Activated B cell treated with CpG ODN at 0.5 μM for 24 hours (primary cell): ENCODE measurements at regions of chr17 and their contacts with region 1.

Region 1: DNA sequence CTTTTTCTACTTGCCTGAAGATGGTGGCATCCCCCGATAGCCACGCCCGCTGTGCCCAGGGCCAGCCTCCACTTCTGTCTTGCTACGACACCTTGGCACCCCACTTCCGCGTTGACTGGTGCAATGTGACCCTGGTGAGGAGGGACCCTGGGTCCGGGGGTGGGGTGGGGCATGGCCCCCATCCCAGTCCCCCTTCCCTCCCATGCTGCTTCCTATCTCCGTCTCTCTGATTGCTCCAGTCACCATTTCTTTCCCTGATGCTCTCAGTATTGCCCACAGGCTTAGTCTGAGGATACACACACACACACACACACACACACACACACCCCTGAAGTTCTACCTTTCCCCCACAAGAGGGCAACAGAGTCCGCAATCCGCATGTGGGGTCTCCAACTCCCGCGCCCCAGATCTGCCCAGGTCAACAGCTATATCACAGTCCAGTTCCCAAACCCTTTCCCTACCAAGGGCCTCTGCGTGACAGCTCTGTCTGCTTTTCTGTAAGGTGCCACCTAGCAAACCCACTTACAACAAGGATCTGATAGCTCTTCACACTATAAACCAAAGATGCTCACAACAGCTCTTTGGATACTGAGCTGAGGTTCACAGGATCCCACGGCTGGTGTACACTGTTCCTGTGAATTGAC is 3.4 kb downstream of the SGCA start:
- DNase-seq: peak; percentile 53
- ATAC-seq: peak; percentile 81
- H3K4me3 Mint-ChIP-seq: peak overlapping the region; percentile 49
- H3K27ac Mint-ChIP-seq: peak overlapping the region; percentile 50
- H3K4me1 Mint-ChIP-seq: peaks cover 29% of the 10 kb centered on the region
- H3K27me3 Mint-ChIP-seq: no peaks in the 10 kb centered on the region
- CTCF ChIP-seq: no peak

Region 2: DNA sequence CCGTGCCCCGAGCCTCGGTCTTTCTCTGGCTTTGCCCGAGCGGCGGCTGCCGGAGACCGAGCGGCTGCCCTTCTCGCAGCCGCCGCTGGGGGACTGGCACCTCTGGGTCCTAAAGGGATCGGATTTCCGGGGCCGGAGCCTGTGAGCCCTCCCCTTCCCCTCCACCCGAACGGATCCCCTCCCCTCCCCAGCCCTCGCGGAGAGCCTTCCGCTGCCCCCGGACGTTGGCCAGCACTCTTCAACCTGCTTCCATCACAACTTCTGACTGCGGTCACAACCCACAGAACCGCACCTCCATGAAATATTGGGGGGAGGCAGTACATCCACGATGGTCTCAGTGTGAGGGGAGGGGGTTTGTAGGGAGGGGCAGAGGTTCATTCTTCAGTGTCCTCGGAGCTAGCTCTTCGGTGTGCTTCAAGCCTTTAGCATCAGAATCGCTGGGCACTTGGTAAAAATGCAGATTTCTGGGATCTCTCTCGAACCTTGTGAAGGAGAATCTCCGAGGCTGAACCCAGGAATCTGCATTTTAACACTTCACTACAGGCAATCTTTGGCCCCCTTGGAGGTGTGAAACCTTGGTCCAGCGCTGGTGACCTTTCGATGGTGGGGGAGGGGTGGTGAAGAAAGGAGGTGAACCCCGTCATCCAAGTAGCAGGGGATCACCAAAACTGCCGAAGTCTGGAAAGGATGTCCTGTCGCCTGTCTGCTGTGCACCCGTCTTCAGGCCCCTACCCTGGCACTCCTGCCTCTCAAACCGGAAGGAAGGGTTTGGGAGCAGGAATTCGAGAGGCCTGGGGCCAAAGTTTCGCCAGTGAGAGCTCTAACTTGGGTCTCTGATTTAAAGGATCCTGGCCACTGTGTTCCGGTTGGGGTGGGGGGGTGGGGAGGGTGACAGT is 18.0 kb before region 1 on chr17:
- CTCF ChIA-PET with region 1: interaction called, 7 read pairs
- POLR2A ChIA-PET with region 1: interaction called, 19 read pairs
- intact Hi-C with region 1: no loop called
- DNase-seq: peak; percentile 80
- ATAC-seq: peak; percentile 40
- H3K4me3 Mint-ChIP-seq: peak overlapping the region; percentile 93
- H3K27ac Mint-ChIP-seq: peak overlapping the region; percentile 91
- H3K4me1 Mint-ChIP-seq: peaks cover 34% of the 10 kb centered on the region
- H3K27me3 Mint-ChIP-seq: no peaks in the 10 kb centered on the region
- CTCF ChIP-seq: no peak

Region 3: GRCh38 chr17:50194934-50195865 is 26.0 kb after region 1 on chr17:
- CTCF ChIA-PET with region 1: interaction called, 86 read pairs
- POLR2A ChIA-PET with region 1: interaction called, 16 read pairs
- intact Hi-C with region 1: loop called (anchors 1 kb)
- DNase-seq: no peak
- ATAC-seq: no peak
- H3K4me3 Mint-ChIP-seq: no peak overlapping the region
- H3K27ac Mint-ChIP-seq: no peak overlapping the region
- H3K4me1 Mint-ChIP-seq: peaks cover 37% of the 10 kb centered on the region
- H3K27me3 Mint-ChIP-seq: peaks cover 9% of the 10 kb centered on the region
- CTCF ChIP-seq: no peak

Region 4: GRCh38 chr17:50269477-50270434 is 100.5 kb after region 1 on chr17:
- CTCF ChIA-PET with region 1: interaction called, 26 read pairs
- POLR2A ChIA-PET with region 1: no interaction called
- intact Hi-C with region 1: loop called (anchors 1 kb)
- DNase-seq: peak; percentile 31
- ATAC-seq: peak; percentile 76
- H3K4me3 Mint-ChIP-seq: no peak overlapping the region
- H3K27ac Mint-ChIP-seq: no peak overlapping the region
- H3K4me1 Mint-ChIP-seq: peaks cover 6% of the 10 kb centered on the region
- H3K27me3 Mint-ChIP-seq: peaks cover 26% of the 10 kb centered on the region
- CTCF ChIP-seq: no peak

Region 5: GRCh38 chr17:50283246-50283645 is 114.0 kb after region 1 on chr17:
- CTCF ChIA-PET with region 1: interaction called, 10 read pairs
- POLR2A ChIA-PET with region 1: no interaction called
- intact Hi-C with region 1: no loop called
- DNase-seq: no peak
- ATAC-seq: no peak
- H3K4me3 Mint-ChIP-seq: no peak overlapping the region
- H3K27ac Mint-ChIP-seq: no peak overlapping the region
- H3K4me1 Mint-ChIP-seq: no peaks in the 10 kb centered on the region
- H3K27me3 Mint-ChIP-seq: peaks cover 40% of the 10 kb centered on the region
- CTCF ChIP-seq: no peak

Region 6: GRCh38 chr17:50297407-50297865 is 128.2 kb after region 1 on chr17:
- CTCF ChIA-PET with region 1: interaction called, 18 read pairs
- POLR2A ChIA-PET with region 1: interaction called, 5 read pairs
- intact Hi-C with region 1: loop called (anchors 1 kb)
- DNase-seq: peak; percentile 67
- ATAC-seq: peak; percentile 100
- H3K4me3 Mint-ChIP-seq: no peak overlapping the region
- H3K27ac Mint-ChIP-seq: no peak overlapping the region
- H3K4me1 Mint-ChIP-seq: no peaks in the 10 kb centered on the region
- H3K27me3 Mint-ChIP-seq: peaks cover 17% of the 10 kb centered on the region
- CTCF ChIP-seq: peak; percentile 21

Region 7: DNA sequence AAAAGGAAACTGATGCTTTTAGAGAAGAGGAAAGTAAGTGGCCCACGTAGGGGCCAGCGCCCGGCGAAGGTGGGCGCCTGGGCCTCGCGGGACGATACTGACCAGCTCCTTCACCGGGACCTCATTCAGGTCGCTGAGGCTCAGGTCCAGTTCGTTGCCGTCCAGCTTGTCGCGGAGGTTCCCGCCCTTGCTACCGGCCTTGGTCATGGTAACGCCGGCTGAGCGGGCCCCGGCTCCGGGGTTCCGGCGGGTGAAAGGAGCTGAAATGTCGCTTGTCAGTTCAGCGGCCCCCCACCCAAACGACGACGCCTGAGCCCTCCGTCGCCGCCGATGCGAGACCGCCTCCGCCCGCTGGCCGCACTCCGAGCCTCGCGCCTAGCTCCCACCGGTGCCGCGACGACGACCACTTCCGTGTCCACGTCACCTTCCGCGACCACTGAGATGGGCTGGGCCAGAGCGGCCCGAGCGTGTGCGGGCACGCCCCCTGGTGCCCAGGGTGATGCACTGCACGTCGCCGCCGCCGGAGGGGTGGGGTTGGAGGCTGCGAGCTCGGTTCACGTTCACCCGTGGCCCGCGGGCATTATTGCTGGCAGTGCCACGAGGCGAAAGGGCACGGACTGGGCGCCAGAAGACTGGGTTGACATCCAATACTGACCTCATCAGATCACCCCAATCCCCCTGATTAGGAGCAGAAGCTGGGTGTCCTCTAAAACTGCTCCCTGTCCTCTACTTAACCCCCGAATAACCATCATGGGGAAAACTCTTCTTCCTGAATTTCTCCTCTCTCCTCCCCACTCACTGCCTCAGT is 228.1 kb after region 1 on chr17 and contains the start of gene LRRC59:
- CTCF ChIA-PET with region 1: no interaction called
- POLR2A ChIA-PET with region 1: no interaction called
- intact Hi-C with region 1: no loop called
- DNase-seq: peak; percentile 95
- ATAC-seq: peak; percentile 100
- H3K4me3 Mint-ChIP-seq: peak within 1 kb of the TSS; percentile 88
- H3K27ac Mint-ChIP-seq: peak within 1 kb of the TSS; percentile 76
- H3K4me1 Mint-ChIP-seq: peaks cover 23% of the 10 kb centered on the region
- H3K27me3 Mint-ChIP-seq: no peaks in the 10 kb centered on the region
- CTCF ChIP-seq: peak; percentile 76
- total RNA-seq, gene LRRC59: 41.8 and 42.0 TPM in 2 replicates

Region 8: GRCh38 chr17:50765454-50766221 is 596.4 kb after region 1 on chr17:
- CTCF ChIA-PET with region 1: no interaction called
- POLR2A ChIA-PET with region 1: no interaction called
- intact Hi-C with region 1: no loop called
- DNase-seq: no peak
- ATAC-seq: peak; percentile 52
- H3K4me3 Mint-ChIP-seq: peak overlapping the region; percentile 28
- H3K27ac Mint-ChIP-seq: peak overlapping the region; percentile 51
- H3K4me1 Mint-ChIP-seq: peaks cover 38% of the 10 kb centered on the region
- H3K27me3 Mint-ChIP-seq: no peaks in the 10 kb centered on the region
- CTCF ChIP-seq: no peak